ENCODE measurements at regions of chr2 and their contacts with region 1.

Region 1: GRCh38 chr2:238370823-238371372 is 50.6 kb downstream of the TRAF3IP1 start:
- DNase-seq: no peak
- H3K4me3 ChIP-seq: no peak overlapping the region
- H3K27me3 ChIP-seq: no peaks in the 10 kb centered on the region
- CTCF ChIP-seq: peak; percentile 91

Region 2: GRCh38 chr2:238358769-238359168 is 12.1 kb before region 1 on chr2:
- CTCF ChIA-PET with region 1: interaction called, 40 read pairs
- POLR2A ChIA-PET with region 1: no interaction called
- DNase-seq: no peak
- H3K4me3 ChIP-seq: no peak overlapping the region
- H3K27me3 ChIP-seq: no peaks in the 10 kb centered on the region
- CTCF ChIP-seq: no peak

Region 3: DNA sequence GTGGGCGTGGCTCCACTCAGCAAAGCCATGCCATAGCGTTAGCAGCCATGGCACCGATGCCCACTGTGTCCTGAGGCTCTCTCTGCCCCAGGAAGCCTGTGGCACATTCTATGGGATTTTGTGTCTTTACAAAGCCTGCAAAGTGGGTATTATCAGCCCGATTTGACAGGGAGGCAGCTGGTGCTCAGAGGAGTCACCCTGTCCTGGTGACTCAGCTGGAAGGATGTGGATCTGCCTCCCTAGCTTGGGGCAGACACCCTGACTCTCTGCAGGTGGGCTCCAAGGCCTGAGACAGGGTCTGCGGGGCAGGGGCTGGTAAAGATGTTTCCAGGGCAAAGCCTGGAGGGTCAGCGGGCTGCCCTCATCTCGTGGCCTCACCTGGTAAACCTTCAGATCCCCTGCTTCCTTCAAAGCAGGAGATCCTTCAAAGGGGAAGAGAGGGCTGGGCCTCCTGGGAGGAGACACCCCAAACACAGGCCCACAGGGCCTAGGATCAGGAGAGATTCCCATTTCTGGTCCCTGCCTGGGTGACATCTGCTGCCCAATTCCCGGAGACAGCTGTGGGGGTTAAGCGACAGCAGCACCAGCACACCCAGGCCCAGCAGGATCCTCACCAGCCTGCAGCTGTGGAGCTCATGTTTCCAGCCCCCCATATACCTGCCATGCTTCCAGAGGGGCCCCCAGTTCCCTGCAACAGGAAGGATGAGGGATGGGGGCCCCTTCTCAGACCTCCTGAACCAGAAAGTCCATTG is 52.8 kb after region 1 on chr2:
- CTCF ChIA-PET with region 1: interaction called, 13 read pairs
- POLR2A ChIA-PET with region 1: no interaction called
- DNase-seq: no peak
- H3K4me3 ChIP-seq: no peak overlapping the region
- H3K27me3 ChIP-seq: no peaks in the 10 kb centered on the region
- CTCF ChIP-seq: no peak

Region 4: GRCh38 chr2:238462782-238463396 is 92.0 kb after region 1 on chr2:
- CTCF ChIA-PET with region 1: interaction called, 61 read pairs
- POLR2A ChIA-PET with region 1: interaction called, 15 read pairs
- DNase-seq: no peak
- H3K4me3 ChIP-seq: no peak overlapping the region
- H3K27me3 ChIP-seq: no peaks in the 10 kb centered on the region
- CTCF ChIP-seq: peak; percentile 61

Region 5: DNA sequence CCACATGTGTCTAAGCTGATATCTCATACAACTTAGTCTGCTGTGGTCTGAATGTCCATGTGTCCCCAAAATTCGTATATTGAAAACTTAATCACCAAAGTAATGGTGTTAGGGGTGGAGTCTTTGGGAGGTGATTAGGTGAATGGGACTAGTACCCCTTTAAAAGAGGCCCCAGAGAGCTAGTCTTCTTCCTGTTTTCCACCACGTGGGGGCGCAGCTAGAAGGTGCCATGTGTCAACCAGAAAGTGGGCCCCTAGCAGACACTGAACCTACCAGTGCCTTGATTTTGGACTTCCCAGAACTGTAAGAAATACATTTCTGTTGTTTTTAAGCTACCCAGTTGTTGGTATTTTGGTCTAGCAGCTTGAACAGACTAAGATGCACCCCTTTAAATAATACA is 142.4 kb after region 1 on chr2:
- CTCF ChIA-PET with region 1: interaction called, 11 read pairs
- POLR2A ChIA-PET with region 1: no interaction called
- DNase-seq: no peak
- H3K4me3 ChIP-seq: no peak overlapping the region
- H3K27me3 ChIP-seq: 0 out of 2 replicates have a peak, but pooled peaks cover 2% of the 10 kb centered on the region
- CTCF ChIP-seq: peak; percentile 73

Region 6: DNA sequence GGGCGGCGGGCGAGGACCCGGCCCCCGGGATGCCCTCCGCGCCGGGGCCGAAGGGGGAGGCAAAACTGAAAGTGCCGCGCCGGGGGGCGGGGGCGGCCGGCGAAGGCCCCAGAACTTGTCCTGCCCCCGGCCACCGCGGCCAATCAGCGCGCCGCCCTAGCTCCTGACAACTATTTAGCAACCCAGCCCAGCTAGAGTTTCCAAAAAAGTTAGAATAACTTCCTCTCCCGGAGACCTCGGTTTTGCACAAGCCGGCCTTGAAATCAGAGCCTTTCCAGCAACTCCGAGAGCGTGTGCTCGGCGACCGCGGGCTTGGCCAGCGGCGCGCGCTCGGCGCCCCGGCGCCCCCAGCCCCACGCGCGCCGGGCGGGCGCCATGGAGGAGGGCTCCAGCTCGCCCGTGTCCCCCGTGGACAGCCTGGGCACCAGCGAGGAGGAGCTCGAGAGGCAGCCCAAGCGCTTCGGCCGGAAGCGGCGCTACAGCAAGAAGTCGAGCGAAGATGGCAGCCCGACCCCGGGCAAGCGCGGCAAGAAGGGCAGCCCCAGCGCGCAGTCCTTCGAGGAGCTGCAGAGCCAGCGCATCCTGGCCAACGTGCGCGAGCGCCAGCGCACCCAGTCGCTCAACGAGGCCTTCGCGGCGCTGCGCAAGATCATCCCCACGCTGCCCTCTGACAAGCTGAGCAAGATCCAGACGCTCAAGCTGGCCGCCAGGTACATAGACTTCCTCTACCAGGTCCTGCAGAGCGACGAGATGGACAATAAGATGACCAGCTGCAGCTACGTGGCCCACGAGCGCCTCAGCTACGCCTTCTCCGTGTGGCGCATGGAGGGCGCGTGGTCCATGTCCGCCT is 477.2 kb after region 1 on chr2 and contains the start of gene TWIST2:
- CTCF ChIA-PET with region 1: interaction called, 13 read pairs
- POLR2A ChIA-PET with region 1: no interaction called
- DNase-seq: peak; percentile 86
- H3K4me3 ChIP-seq: peak within 1 kb of the TSS; percentile 100
- H3K27me3 ChIP-seq: no peaks in the 10 kb centered on the region
- CTCF ChIP-seq: peak; percentile 32; the same call in 1 of the 2 replicates
- polyA plus RNA-seq, gene TWIST2: 110 and 127 TPM in 2 replicates

Measured in BJ (cell line).